MCF 10A (cell line): ENCODE measurements at regions of chr6 and their contacts with region 1.

Region 1: DNA sequence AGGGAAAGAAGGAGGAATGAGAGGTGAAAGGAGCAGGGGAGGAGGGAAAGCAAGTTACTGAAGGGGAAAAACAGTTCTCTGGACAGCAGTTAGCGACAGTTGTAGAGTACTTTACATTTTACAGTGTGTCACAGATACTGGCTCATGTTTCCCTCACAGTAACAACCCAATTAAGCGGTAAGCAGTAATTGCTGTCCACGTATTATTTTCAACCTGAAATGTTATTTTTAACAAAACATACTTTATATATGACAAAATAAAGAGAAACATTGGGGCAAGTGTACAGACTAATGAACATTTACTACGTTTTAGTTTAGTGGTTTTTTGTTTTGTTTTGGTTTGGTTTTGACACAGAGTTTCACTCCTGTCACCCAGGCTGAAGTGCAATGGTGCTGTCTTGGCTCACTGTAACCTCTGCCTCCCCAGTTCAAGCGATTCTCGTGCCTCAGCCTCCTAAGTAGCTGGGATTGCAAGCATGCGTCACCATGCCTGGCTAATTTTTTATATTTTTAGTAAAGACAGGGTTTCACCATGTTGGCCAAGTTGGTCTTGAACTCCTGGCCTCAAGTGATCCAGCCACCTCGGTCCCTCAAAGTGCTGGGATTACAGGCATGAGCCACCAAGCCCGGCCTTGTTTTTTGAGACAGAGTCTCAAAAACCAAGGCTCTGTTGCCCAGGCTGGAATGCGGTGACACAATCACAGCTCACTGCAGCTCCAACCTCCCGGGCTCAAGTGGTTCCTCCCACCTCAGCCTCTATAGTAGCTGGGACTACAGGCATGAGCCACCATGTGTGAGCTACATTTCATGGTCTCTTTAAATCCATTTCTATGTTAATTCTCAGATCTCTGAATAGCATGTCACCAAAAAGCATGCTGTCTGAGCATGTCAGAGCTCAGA is 22.6 kb upstream of the BTN3A2 start:
- DNase-seq: peak; percentile 45
- H3K4me3 Mint-ChIP-seq: peak overlapping the region; percentile 45
- H3K27ac Mint-ChIP-seq: no peak overlapping the region
- H3K4me1 Mint-ChIP-seq: peaks cover 7% of the 10 kb centered on the region
- H3K27me3 Mint-ChIP-seq: no peaks in the 10 kb centered on the region
- CTCF ChIP-seq: no peak

Region 2: DNA sequence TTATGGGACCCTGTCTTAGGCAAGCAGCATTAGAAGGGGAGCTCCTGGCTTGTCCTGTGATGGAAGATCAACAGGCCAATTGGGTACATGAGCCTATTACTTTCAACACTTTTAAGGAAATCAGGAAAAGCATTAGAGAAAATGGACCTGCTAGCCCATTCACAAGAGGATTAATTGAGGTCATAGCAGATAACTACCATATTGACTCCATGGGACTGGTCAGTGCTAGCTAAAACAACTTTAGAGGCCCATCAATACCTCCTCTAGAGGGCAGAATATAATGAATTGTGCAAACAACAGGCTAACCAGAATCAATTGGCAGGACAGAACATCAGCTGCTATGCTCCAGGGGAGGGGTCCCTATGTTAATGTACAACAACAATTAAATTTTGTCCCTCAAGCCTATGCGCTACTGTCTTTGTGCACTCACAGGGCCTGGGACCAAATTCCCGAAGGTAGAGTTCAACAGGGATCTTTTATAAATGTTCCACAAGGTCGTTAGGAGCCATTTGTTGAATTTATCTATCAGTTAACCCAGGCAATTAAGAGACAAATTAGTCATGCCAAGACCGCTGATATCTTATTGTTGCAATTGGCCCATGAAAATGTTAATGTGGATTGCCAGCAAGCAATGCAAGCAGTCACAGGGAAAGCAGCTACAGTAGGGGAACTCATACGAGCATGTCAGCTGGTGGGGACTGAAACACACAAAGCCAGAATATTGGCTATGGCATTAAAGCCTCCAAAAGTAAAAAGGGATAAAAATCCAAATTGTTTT is 84.0 kb before region 1 on chr6:
- CTCF ChIA-PET with region 1: no interaction called
- POLR2A ChIA-PET with region 1: no interaction called
- intact Hi-C with region 1: no loop called
- DNase-seq: peak; percentile 24
- H3K4me3 Mint-ChIP-seq: no peak overlapping the region
- H3K27ac Mint-ChIP-seq: no peak overlapping the region
- H3K4me1 Mint-ChIP-seq: peaks cover 2% of the 10 kb centered on the region
- H3K27me3 Mint-ChIP-seq: no peaks in the 10 kb centered on the region
- CTCF ChIP-seq: peak; percentile 16

Region 3: DNA sequence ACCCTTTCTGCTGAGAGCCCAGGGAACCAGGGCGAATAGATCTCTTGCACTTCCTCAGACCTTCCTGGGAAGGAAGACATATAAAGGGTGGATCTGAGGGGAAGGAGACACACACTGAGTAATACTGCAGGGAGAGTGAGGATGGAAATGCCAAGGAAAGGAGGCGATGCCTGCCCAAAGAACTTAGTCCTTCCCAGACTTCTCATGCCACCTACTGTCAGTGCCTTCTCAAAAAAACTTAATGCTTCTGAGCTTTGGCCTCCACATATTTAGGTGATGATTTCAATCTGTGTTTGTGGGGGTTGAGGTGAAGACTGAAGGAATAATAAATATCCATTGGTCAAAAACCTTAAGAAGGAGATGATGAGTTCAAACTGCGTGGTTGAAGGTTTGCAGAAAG is 69.4 kb after region 1 on chr6:
- CTCF ChIA-PET with region 1: interaction called, 4 read pairs
- POLR2A ChIA-PET with region 1: no interaction called
- intact Hi-C with region 1: loop called (anchors 2 kb)
- DNase-seq: no peak
- H3K4me3 Mint-ChIP-seq: no peak overlapping the region
- H3K27ac Mint-ChIP-seq: no peak overlapping the region
- H3K4me1 Mint-ChIP-seq: no peaks in the 10 kb centered on the region
- H3K27me3 Mint-ChIP-seq: no peaks in the 10 kb centered on the region
- CTCF ChIP-seq: peak; percentile 15

Region 4: GRCh38 chr6:26421259-26422144 is 79.1 kb after region 1 on chr6:
- CTCF ChIA-PET with region 1: interaction called, 3 read pairs
- POLR2A ChIA-PET with region 1: interaction called, 3 read pairs
- intact Hi-C with region 1: loop called (anchors 2 kb)
- DNase-seq: peak; percentile 93
- H3K4me3 Mint-ChIP-seq: no peak overlapping the region
- H3K27ac Mint-ChIP-seq: no peak overlapping the region
- H3K4me1 Mint-ChIP-seq: peaks cover 29% of the 10 kb centered on the region
- H3K27me3 Mint-ChIP-seq: no peaks in the 10 kb centered on the region
- CTCF ChIP-seq: no peak

Region 5: DNA sequence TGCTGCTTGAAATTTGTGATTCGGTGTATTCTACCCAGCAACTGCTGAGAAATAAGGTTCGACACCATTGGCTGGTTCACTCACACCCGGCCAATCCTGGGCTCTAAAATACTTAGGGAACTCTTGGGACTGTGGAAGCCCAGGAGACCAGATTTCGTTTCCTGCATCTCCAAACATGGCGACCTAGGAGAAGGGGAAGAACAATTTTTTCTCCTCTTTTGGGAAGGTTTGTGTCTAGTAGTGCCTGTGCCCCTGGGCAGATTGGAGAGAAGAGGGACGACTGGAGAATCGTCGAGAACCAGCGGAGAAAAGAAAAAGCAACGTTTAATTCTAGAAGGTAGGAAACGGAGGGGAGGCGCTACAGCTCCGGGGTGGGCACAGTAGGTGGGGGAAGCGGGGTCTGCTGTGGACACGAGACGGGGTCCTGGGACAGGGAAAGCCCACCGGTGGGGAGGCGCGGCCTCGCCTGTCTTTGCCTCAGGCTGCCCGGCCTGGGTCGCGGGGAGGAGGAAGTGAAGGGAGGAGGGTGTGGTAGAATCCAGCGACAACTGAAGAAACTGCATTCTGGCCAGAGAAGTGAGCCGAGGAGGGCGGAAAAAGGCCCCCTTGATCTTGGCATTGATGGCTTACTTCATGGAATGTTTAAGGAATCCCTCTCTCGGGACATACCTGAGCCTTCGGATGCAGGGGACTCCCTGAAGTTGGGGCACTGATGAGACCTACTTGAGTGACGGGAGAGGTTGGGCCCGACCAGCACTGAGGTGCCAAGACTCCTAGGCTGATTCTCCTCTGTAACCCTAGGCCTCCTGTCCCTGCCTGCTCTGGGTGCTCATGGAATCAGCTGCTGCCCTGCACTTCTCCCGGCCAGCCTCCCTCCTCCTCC is 115.7 kb after region 1 on chr6 and contains the start of gene BTN2A1:
- CTCF ChIA-PET with region 1: interaction called, 3 read pairs
- POLR2A ChIA-PET with region 1: no interaction called
- intact Hi-C with region 1: loop called (anchors 10 kb)
- DNase-seq: peak; percentile 94
- H3K4me3 Mint-ChIP-seq: peak within 1 kb of the TSS; percentile 85
- H3K27ac Mint-ChIP-seq: peak within 1 kb of the TSS; percentile 98
- H3K4me1 Mint-ChIP-seq: peaks cover 20% of the 10 kb centered on the region
- H3K27me3 Mint-ChIP-seq: no peaks in the 10 kb centered on the region
- CTCF ChIP-seq: no peak
- total RNA-seq, gene BTN2A1: 14.6 and 16.9 TPM in 2 replicates

Region 6: DNA sequence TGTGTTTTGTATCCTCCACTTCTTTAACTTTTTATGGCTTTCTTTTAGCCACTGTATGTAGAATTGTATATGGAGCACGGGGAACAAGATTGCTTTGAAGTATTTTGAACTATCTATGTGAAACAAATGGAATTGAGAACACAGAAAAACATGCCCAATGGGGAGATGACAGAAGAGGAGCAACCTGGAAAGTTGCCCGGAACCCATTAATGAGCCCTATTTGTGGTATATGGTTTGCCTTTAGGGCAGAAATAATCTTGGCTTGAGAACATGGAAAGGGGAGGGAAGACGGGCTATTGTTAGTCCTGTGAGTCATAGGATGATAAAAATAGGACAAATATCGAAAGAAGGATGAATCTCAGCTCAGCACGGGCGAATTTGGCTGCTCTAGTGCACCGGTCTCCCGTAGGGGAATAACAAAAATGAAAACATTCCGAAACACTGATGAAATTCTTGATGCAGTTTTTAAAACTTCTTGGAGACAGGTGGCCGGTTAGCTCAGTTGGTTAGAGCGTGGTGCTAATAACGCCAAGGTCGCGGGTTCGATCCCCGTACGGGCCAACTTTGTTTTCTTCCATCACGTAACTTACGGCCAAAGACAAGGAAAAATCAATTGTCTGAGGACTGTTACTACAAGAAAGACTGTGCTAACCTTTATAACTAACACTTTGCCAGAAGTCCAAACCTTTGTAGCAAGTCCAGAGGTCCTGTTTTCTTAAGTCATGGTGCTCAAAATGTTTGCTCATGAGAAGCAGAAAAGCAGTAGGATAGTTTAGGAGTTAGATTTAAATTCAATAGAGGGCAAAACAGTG is 211.5 kb after region 1 on chr6:
- CTCF ChIA-PET with region 1: interaction called, 7 read pairs
- POLR2A ChIA-PET with region 1: no interaction called
- intact Hi-C with region 1: loop called (anchors 5 kb)
- DNase-seq: peak; percentile 95
- H3K4me3 Mint-ChIP-seq: no peak overlapping the region
- H3K27ac Mint-ChIP-seq: no peak overlapping the region
- H3K4me1 Mint-ChIP-seq: peaks cover 21% of the 10 kb centered on the region
- H3K27me3 Mint-ChIP-seq: no peaks in the 10 kb centered on the region
- CTCF ChIP-seq: no peak

Region 7: DNA sequence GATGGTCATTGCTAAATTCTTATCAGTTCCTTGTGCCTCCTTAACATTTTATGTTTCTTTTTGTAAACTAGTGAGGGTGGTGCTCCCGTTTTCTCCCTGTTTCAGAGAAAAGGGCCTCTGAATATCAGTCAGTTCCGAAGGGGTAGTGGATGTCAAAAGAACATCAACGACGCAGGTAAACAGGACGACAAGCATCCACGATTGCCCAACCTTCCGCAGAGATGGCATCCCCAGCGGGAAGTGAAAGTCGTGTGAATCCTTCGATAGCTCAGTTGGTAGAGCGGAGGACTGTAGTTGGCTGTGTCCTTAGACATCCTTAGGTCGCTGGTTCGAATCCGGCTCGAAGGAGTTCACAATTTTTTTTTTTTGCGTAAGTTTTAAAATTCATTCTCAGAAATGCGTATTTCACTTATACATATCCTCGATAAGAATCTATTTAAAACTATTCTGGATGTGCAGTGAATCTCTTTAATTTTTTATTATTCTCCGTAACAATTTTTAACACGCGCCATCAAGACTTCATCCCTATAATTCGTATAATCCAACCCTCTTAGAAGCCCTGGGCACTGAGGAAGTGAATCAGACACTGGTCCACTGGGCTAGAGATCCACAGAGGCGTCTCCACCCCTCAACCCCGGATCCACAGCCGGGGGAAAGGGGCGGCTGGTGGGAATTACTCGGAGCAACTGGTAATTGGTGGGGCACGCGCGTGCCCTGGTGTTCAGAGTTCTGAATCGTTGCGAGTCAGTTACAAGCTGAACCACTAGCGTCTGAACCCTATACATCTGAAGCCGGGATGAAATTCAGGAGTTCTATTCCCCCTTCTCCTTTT is 226.5 kb after region 1 on chr6:
- CTCF ChIA-PET with region 1: interaction called, 11 read pairs
- POLR2A ChIA-PET with region 1: interaction called, 3 read pairs
- intact Hi-C with region 1: loop called (anchors 2 kb)
- DNase-seq: peak; percentile 96
- H3K4me3 Mint-ChIP-seq: peak overlapping the region; percentile 85
- H3K27ac Mint-ChIP-seq: peak overlapping the region; percentile 76
- H3K4me1 Mint-ChIP-seq: peaks cover 6% of the 10 kb centered on the region
- H3K27me3 Mint-ChIP-seq: no peaks in the 10 kb centered on the region
- CTCF ChIP-seq: no peak

Region 8: GRCh38 chr6:26596579-26597388 is 254.4 kb after region 1 on chr6 and contains the start of gene ABT1:
- CTCF ChIA-PET with region 1: interaction called, 18 read pairs
- POLR2A ChIA-PET with region 1: interaction called, 11 read pairs
- intact Hi-C with region 1: loop called (anchors 1 kb)
- DNase-seq: peak; percentile 99
- H3K4me3 Mint-ChIP-seq: no peak within 1 kb of the TSS
- H3K27ac Mint-ChIP-seq: no peak within 1 kb of the TSS
- H3K4me1 Mint-ChIP-seq: peaks cover 6% of the 10 kb centered on the region
- H3K27me3 Mint-ChIP-seq: no peaks in the 10 kb centered on the region
- CTCF ChIP-seq: no peak
- total RNA-seq, gene ABT1: 11.9 and 12.9 TPM in 2 replicates